ENCODE measurements at regions of chrX and their contacts with region 1.

Region 1: DNA sequence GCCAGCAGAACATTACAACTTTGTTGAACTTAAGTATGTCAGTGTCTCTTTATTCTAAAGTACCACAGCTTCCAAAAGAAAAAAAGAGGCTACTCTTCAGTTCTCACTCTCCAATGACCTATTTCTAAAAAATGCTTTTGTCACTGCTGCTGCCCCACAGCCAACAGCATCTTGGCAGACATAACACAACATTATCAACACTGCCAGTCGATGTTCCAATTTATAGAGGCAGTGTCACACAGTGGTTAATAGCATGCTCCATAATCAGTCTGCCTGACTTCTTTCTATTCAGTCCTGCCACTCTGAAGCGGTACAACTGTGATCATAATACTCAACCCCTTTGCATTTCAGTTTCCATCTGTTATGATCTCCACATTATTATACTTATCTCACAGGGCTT is 69.2 kb downstream of the PLS3 start:
- DNase-seq: no peak
- H3K4me3 ChIP-seq: no peak overlapping the region
- H3K27ac ChIP-seq: peak overlapping the region; percentile 12 to 69
- H3K4me1 ChIP-seq: peaks cover 2 to 14% of the 10 kb centered on the region in 2 donors
- H3K27me3 ChIP-seq: no peaks in the 10 kb centered on the region
- CTCF ChIP-seq: no peak

Region 2: DNA sequence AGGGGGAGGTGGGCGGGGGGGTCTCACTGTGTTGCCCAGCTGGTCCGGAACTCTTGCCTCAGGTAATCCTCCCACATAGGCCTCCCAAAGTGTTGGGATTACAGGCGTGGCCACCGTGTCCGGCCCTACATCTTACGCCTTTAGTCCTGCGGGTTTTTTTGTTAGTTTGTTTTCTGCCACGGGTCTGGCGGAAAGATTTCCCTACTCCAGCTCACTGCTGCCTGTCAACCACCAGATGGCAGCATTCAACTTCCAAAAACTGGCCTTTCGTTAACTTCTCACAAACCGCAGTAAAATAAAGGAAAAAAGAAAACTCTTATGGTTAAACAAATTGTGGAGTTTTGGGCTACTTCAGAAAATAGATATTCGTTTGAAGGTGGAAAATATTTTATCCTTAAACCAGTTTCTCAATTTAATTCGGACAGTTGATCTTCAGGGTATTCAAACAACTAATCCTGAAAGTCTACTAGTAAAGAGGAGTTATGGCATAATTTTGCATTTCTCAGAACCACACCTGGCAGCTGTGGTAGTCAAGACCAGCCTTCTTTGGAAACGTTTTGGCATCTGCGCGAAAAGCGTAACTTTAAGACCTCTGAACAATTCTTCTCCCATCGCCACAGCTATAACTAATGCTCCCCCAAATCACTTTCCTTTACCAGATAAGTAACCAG is 299.6 kb before region 1 on chrX:
- intact Hi-C with region 1: no loop called
- DNase-seq: no peak
- H3K4me3 ChIP-seq: peak overlapping the region; percentile 19 to 39
- H3K27ac ChIP-seq: peak overlapping the region; percentile 56 to 62
- H3K4me1 ChIP-seq: no peaks in the 10 kb centered on the region
- H3K27me3 ChIP-seq: no peaks in the 10 kb centered on the region
- CTCF ChIP-seq: peak; percentile 68 to 85 (median 79)

Region 3: DNA sequence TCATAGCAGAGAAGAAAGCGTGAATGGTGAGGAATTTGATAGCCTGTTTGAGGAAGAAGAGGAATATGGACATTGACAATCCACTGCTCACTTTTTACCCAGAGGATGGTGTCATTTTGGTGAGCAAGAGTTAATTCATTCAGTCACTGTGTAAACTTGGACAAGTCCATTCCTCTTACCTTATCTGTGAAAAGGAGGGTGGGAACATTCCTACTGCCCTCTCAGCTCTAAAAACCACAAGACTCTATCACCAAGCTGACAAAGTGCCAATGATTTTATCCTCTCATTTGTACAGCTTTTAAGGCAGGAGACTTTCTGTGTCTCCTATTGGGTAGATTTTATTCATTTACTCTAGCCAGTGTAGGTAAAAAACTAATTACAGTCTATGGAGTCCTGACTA is 236.9 kb before region 1 on chrX:
- intact Hi-C with region 1: no loop called
- DNase-seq: no peak
- H3K4me3 ChIP-seq: no peak overlapping the region
- H3K27ac ChIP-seq: no peak overlapping the region
- H3K4me1 ChIP-seq: no peaks in the 10 kb centered on the region
- H3K27me3 ChIP-seq: no peaks in the 10 kb centered on the region
- CTCF ChIP-seq: no peak

Region 4: DNA sequence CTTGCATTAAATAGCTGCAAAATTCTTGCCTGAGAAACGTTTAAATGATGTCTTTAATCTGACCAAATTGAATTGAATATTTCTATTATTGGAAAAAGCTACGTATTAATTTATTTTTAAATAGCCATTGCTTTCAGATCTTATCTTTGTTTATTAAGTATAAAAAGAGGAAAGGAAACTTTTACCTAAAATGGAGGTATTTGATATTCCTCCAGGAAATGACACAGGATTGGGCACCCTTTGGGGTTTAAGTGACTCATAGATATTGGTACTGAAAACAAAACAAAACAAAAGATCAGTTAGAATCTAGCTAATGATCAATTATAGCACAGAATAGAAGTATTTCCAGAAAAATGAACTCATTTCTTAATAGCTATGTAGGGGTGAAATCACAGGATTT is 35.2 kb before region 1 on chrX:
- intact Hi-C with region 1: loop called (anchors 5 kb)
- DNase-seq: no peak
- H3K4me3 ChIP-seq: peak overlapping the region in 1 of 2 donors; percentile 60
- H3K27ac ChIP-seq: peak overlapping the region; percentile 74 to 81
- H3K4me1 ChIP-seq: no peaks in the 10 kb centered on the region
- H3K27me3 ChIP-seq: peaks cover 2% of the 10 kb centered on the region
- CTCF ChIP-seq: no peak

Measured in ascending aorta (tissue), 2 donors.